Spleen (tissue), 13 donors: ENCODE measurements at regions of chr9 and their contacts with region 1.

Region 1: GRCh38 chr9:9319007-9319406 is 1293.8 kb downstream of the PTPRD start:
- DNase-seq: no peak
- H3K4me3 ChIP-seq: no peak overlapping the region
- H3K27ac ChIP-seq: no peak overlapping the region
- H3K4me1 ChIP-seq: no peaks in the 10 kb centered on the region
- H3K27me3 ChIP-seq: no peaks in the 10 kb centered on the region
- CTCF ChIP-seq: no peak
- POLR2A ChIP-seq: no peak

Region 2: DNA sequence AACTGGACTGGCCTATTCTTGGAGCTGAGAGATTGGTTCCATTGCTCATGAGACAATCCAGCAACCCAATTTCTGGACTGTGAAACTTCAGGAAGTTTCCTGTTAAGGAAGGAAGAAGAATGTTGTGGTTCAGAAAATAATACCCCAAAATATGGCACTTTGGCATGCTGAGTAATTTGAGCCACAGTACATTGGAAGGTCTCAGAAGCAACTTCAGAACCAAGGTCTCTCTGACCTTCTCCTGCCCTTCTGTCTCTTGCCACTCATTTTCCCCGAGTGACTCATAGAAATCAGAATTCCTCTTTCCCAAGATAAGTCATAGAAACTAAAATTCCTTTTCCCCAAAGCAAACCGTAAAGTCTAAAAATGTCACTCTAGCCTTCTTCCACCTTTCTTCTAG is 72.3 kb before region 1 on chr9:
- intact Hi-C with region 1: loop called (anchors 2 kb)
- DNase-seq: no peak
- H3K4me3 ChIP-seq: no peak overlapping the region
- H3K27ac ChIP-seq: no peak overlapping the region
- H3K4me1 ChIP-seq: no peaks in the 10 kb centered on the region
- H3K27me3 ChIP-seq: no peaks in the 10 kb centered on the region
- CTCF ChIP-seq: no peak
- POLR2A ChIP-seq: no peak

Region 3: DNA sequence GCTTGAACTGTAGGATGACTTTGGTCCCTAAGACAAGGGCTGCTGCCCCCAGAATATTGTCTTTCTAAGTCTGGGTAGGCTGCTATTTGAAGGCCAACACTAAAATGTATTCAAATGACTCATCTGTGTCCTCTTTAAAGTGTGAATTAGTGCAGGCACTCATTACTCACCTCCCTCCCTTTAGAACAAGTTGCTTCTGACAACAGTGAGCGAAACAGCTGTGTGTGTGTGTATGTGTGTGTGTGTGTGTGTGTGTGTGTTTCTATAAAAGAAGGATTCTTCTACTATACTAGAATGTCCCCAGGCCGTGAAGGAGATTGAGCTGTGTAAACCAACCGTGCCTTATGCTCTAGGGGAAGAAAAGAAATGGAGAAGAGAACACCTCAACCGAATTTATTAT is 43.4 kb before region 1 on chr9:
- intact Hi-C with region 1: no loop called
- DNase-seq: no peak
- H3K4me3 ChIP-seq: no peak overlapping the region
- H3K27ac ChIP-seq: no peak overlapping the region
- H3K4me1 ChIP-seq: no peaks in the 10 kb centered on the region
- H3K27me3 ChIP-seq: no peaks in the 10 kb centered on the region
- CTCF ChIP-seq: no peak
- POLR2A ChIP-seq: no peak